ENCODE measurements at regions of chr3 and their contacts with region 1.

Region 1: GRCh38 chr3:108914774-108915641 is 38.7 kb downstream of the GUCA1C start:
- DNase-seq: peak; percentile 73 to 75 (median 73)
- H3K4me3 ChIP-seq: no peak overlapping the region
- H3K4me3 Mint-ChIP-seq: peak overlapping the region in 7 of 8 donors; percentile 41 to 77 (median 61)
- H3K27ac ChIP-seq: no peak overlapping the region
- H3K27ac Mint-ChIP-seq: peak overlapping the region in 2 of 7 donors; percentile 29 to 66
- H3K4me1 ChIP-seq: peaks cover 9% of the 10 kb centered on the region
- H3K4me1 Mint-ChIP-seq: peaks cover 15 to 23% (median 16%) of the 10 kb centered on the region in 4 donors
- H3K27me3 ChIP-seq: no peaks in the 10 kb centered on the region
- H3K27me3 Mint-ChIP-seq: peaks cover 2 to 4% of the 10 kb centered on the region in 2 donors

Region 2: DNA sequence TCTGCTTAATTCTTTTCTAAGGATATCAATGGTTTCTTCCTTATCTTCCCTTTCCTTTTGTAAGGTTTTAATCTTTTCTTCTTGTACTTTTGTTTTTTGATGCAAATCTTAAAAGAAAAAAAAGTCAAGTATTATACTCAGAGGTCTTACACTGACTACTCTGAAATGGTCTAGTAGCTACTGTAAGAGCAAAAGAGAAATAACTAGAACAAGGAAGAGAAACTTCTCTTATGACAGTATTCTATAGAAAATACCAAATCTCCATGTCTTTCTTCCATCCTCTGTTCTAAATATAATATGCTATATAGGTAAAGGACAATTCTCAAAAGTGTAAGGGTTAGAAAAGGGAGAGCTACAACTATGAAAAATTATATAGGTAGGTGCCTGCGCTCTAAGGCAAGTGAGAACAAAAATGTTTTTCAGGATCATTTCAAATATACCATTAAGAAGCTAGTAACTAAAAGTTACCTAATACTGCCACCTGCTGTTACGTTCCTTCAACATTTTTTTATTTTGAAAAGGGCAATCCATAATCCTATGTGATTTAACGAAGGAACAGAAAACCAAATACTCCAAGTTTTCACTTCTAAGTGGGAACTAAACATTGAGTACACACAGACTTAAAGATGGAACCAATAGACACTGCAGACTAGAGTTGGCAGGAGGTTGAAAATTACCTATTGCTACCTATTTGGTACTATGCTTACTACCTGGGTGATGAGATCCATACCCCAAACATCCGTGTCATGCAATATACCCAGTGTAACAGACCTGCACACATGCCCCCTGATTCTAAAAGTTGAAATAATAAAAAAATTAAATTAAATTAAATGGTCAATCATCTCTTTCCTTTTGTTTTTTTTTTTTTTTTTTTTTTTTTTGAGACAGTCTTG is 362.5 kb before region 1 on chr3:
- CTCF ChIA-PET with region 1: interaction called, 29 read pairs
- POLR2A ChIA-PET with region 1: no interaction called
- intact Hi-C with region 1: loop called (anchors 1 kb)
- DNase-seq: peak in 4 of 5 donors; percentile 38 to 50 (median 39)
- H3K4me3 ChIP-seq: no peak overlapping the region
- H3K4me3 Mint-ChIP-seq: peak overlapping the region in 1 of 8 donors; percentile 14
- H3K27ac ChIP-seq: no peak overlapping the region
- H3K27ac Mint-ChIP-seq: peak overlapping the region in 2 of 7 donors; percentile 6 to 38
- H3K4me1 ChIP-seq: no peaks in the 10 kb centered on the region
- H3K4me1 Mint-ChIP-seq: peaks cover 4 to 7% (median 7%) of the 10 kb centered on the region in 4 donors
- H3K27me3 ChIP-seq: no peaks in the 10 kb centered on the region
- H3K27me3 Mint-ChIP-seq: no peaks in the 10 kb centered on the region

Region 3: GRCh38 chr3:108645364-108645763 is 269.6 kb before region 1 on chr3:
- CTCF ChIA-PET with region 1: interaction called, 12 read pairs
- POLR2A ChIA-PET with region 1: no interaction called
- intact Hi-C with region 1: no loop called
- DNase-seq: no peak
- H3K4me3 ChIP-seq: no peak overlapping the region
- H3K4me3 Mint-ChIP-seq: no peak overlapping the region
- H3K27ac ChIP-seq: no peak overlapping the region
- H3K27ac Mint-ChIP-seq: no peak overlapping the region
- H3K4me1 ChIP-seq: no peaks in the 10 kb centered on the region
- H3K4me1 Mint-ChIP-seq: no peaks in the 10 kb centered on the region
- H3K27me3 ChIP-seq: no peaks in the 10 kb centered on the region
- H3K27me3 Mint-ChIP-seq: no peaks in the 10 kb centered on the region

Region 4: GRCh38 chr3:108673988-108674661 is 240.9 kb before region 1 on chr3:
- CTCF ChIA-PET with region 1: interaction called, 191 read pairs
- POLR2A ChIA-PET with region 1: no interaction called
- intact Hi-C with region 1: no loop called
- DNase-seq: no peak
- H3K4me3 ChIP-seq: no peak overlapping the region
- H3K4me3 Mint-ChIP-seq: no peak overlapping the region
- H3K27ac ChIP-seq: no peak overlapping the region
- H3K27ac Mint-ChIP-seq: no peak overlapping the region
- H3K4me1 ChIP-seq: no peaks in the 10 kb centered on the region
- H3K4me1 Mint-ChIP-seq: no peaks in the 10 kb centered on the region
- H3K27me3 ChIP-seq: no peaks in the 10 kb centered on the region
- H3K27me3 Mint-ChIP-seq: no peaks in the 10 kb centered on the region

Region 5: GRCh38 chr3:108835101-108835500 is 79.9 kb before region 1 on chr3:
- CTCF ChIA-PET with region 1: interaction called, 16 read pairs
- POLR2A ChIA-PET with region 1: no interaction called
- intact Hi-C with region 1: no loop called
- DNase-seq: peak; percentile 61 to 85 (median 72)
- H3K4me3 ChIP-seq: peak overlapping the region; percentile 3 to 48
- H3K4me3 Mint-ChIP-seq: peak overlapping the region; percentile 77 to 90 (median 86)
- H3K27ac ChIP-seq: peak overlapping the region; percentile 57
- H3K27ac Mint-ChIP-seq: peak overlapping the region; percentile 68 to 94 (median 89)
- H3K4me1 ChIP-seq: peaks cover 95% of the 10 kb centered on the region
- H3K4me1 Mint-ChIP-seq: peaks cover 71 to 95% (median 79%) of the 10 kb centered on the region in 4 donors
- H3K27me3 ChIP-seq: no peaks in the 10 kb centered on the region
- H3K27me3 Mint-ChIP-seq: no peaks in the 10 kb centered on the region

Region 6: DNA sequence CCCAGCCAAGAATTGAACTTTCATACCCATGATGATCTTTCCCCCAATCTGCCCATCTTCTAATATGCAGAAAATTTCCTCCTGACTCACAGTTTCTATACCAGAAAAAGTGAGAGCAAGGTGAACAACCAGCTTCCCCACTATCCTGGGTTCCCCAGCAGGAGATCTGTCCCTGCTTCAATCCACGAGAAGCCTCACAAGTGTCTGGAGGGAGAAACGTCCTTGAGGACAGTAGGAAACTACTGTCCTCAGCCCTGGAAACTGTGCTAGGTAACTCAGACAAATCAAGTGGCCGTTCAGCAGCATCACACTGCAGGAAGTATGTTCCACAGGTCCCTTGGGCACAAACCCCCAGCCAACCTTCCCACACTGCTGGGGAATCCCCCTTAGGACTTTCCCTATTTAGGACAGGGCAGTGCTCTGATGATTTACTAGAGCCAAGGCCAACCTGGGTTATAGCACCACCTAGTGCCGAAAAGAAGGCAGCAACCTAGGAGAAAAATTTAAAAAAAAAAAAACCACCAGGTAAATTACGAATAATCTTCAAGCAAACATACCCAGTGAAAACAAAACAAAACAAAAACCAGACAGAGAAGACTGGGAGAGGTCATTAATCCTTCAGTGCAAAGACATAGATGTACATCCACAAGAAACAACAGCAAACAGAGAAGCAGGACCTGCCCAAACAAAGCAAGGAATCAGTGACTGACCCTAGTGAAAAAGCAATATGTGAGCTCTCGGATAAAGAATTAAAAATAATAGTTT is 166.9 kb after region 1 on chr3:
- CTCF ChIA-PET with region 1: interaction called, 3 read pairs
- POLR2A ChIA-PET with region 1: no interaction called
- intact Hi-C with region 1: loop called (anchors 1 kb)
- DNase-seq: peak in 4 of 5 donors; percentile 2 to 30 (median 17)
- H3K4me3 ChIP-seq: no peak overlapping the region
- H3K4me3 Mint-ChIP-seq: peak overlapping the region in 1 of 8 donors; percentile 23
- H3K27ac ChIP-seq: no peak overlapping the region
- H3K27ac Mint-ChIP-seq: no peak overlapping the region
- H3K4me1 ChIP-seq: no peaks in the 10 kb centered on the region
- H3K4me1 Mint-ChIP-seq: no peaks in the 10 kb centered on the region
- H3K27me3 ChIP-seq: peaks cover 5% of the 10 kb centered on the region
- H3K27me3 Mint-ChIP-seq: peaks cover 10 to 17% of the 10 kb centered on the region in 2 donors

Region 7: GRCh38 chr3:109154979-109155378 is 240.0 kb after region 1 on chr3:
- CTCF ChIA-PET with region 1: no interaction called
- POLR2A ChIA-PET with region 1: no interaction called
- intact Hi-C with region 1: no loop called
- DNase-seq: no peak
- H3K4me3 ChIP-seq: no peak overlapping the region
- H3K4me3 Mint-ChIP-seq: no peak overlapping the region
- H3K27ac ChIP-seq: no peak overlapping the region
- H3K27ac Mint-ChIP-seq: no peak overlapping the region
- H3K4me1 ChIP-seq: no peaks in the 10 kb centered on the region
- H3K4me1 Mint-ChIP-seq: no peaks in the 10 kb centered on the region
- H3K27me3 ChIP-seq: no peaks in the 10 kb centered on the region
- H3K27me3 Mint-ChIP-seq: peaks cover 0 to 2% of the 10 kb centered on the region in 2 donors

Region 8: GRCh38 chr3:110157221-110157620 is 1242.2 kb after region 1 on chr3:
- CTCF ChIA-PET with region 1: no interaction called
- POLR2A ChIA-PET with region 1: no interaction called
- intact Hi-C with region 1: no loop called
- DNase-seq: no peak
- H3K4me3 ChIP-seq: no peak overlapping the region
- H3K4me3 Mint-ChIP-seq: no peak overlapping the region
- H3K27ac ChIP-seq: no peak overlapping the region
- H3K27ac Mint-ChIP-seq: no peak overlapping the region
- H3K4me1 ChIP-seq: no peaks in the 10 kb centered on the region
- H3K4me1 Mint-ChIP-seq: no peaks in the 10 kb centered on the region
- H3K27me3 ChIP-seq: no peaks in the 10 kb centered on the region
- H3K27me3 Mint-ChIP-seq: peaks cover 0 to 3% of the 10 kb centered on the region in 2 donors

Measured in CD4-positive, alpha-beta memory T cell (primary cell).